ENCODE measurements at regions of chr7 and their contacts with region 1.

Region 1: GRCh38 chr7:91940572-91941341 is at the start of gene AKAP9:
- DNase-seq: peak; percentile 77 to 94 (median 84)
- ATAC-seq: peak; percentile 88
- H3K4me3 ChIP-seq: peak within 1 kb of the TSS; percentile 96
- H3K4me3 Mint-ChIP-seq: peak within 1 kb of the TSS; percentile 90
- H3K27ac ChIP-seq: peak within 1 kb of the TSS; percentile 82 to 93
- H3K27ac Mint-ChIP-seq: peak within 1 kb of the TSS; percentile 92
- H3K4me1 ChIP-seq: peaks cover 25% of the 10 kb centered on the region
- H3K4me1 Mint-ChIP-seq: peaks cover 49% of the 10 kb centered on the region
- H3K27me3 ChIP-seq: no peaks in the 10 kb centered on the region
- H3K27me3 Mint-ChIP-seq: no peaks in the 10 kb centered on the region
- CTCF ChIP-seq: no peak
- total RNA-seq, gene AKAP9: 62.5 to 64.8 TPM

Region 2: DNA sequence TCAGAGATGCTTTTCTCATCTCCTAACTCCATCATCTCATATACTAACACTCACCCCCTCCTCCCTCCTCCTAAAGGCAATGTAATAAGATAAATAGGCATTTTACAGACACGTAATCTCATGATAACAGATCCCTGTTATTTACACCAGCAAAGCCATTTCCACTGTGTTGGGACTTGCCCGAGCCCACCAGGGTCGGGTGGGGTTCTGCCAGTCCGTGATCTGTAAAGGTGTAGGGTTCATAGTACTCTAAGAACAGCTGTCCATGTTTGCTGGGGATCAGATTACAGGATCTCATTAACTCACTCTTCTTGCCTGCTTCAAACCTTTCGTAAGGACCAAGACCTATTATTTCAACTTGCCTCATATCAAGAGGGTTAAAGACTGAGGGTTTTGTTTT is 504.1 kb before region 1 on chr7:
- CTCF ChIA-PET with region 1: no interaction called
- POLR2A ChIA-PET with region 1: no interaction called
- intact Hi-C with region 1: no loop called
- DNase-seq: no peak
- ATAC-seq: no peak
- H3K4me3 ChIP-seq: no peak overlapping the region
- H3K4me3 Mint-ChIP-seq: no peak overlapping the region
- H3K27ac ChIP-seq: no peak overlapping the region
- H3K27ac Mint-ChIP-seq: no peak overlapping the region
- H3K4me1 ChIP-seq: no peaks in the 10 kb centered on the region
- H3K4me1 Mint-ChIP-seq: no peaks in the 10 kb centered on the region
- H3K27me3 ChIP-seq: no peaks in the 10 kb centered on the region
- H3K27me3 Mint-ChIP-seq: peaks cover 5% of the 10 kb centered on the region
- CTCF ChIP-seq: no peak

Region 3: DNA sequence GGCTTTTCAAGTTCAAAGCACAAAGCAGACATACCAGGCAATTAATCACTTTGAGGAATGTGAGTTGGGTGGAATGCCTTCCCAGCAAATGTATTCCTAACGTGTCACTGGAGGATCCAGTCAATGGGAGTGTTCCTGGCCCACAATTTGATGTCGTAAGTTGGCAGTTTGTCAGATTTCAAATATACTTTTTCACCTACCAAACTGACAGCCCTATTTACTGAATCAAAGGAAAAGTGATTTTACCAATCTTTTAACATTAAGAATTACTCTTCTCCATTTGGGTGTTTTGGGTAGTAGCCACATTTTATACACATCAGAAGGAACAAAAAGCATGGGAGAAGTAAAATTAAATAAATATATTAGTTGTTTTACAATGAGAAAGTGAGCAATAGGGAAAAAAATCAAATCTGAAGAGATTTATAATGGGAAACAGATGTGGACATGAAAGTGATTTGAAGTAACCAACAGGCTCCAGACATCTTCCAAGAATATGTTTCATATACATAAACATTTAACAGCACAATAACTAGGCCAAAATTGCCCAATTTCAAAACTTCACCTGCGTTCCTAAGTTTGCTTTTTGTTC is 283.2 kb before region 1 on chr7:
- CTCF ChIA-PET with region 1: no interaction called
- POLR2A ChIA-PET with region 1: no interaction called
- intact Hi-C with region 1: no loop called
- DNase-seq: no peak
- ATAC-seq: no peak
- H3K4me3 ChIP-seq: no peak overlapping the region
- H3K4me3 Mint-ChIP-seq: no peak overlapping the region
- H3K27ac ChIP-seq: no peak overlapping the region
- H3K27ac Mint-ChIP-seq: no peak overlapping the region
- H3K4me1 ChIP-seq: no peaks in the 10 kb centered on the region
- H3K4me1 Mint-ChIP-seq: no peaks in the 10 kb centered on the region
- H3K27me3 ChIP-seq: no peaks in the 10 kb centered on the region
- H3K27me3 Mint-ChIP-seq: no peaks in the 10 kb centered on the region
- CTCF ChIP-seq: no peak

Region 4: GRCh38 chr7:91979590-91979989 is 38.8 kb after region 1 on chr7:
- CTCF ChIA-PET with region 1: no interaction called
- POLR2A ChIA-PET with region 1: no interaction called
- intact Hi-C with region 1: loop called in 1 of 2 experiments (anchors 5 kb)
- DNase-seq: no peak
- ATAC-seq: no peak
- H3K4me3 ChIP-seq: no peak overlapping the region
- H3K4me3 Mint-ChIP-seq: no peak overlapping the region
- H3K27ac ChIP-seq: no peak overlapping the region
- H3K27ac Mint-ChIP-seq: no peak overlapping the region
- H3K4me1 ChIP-seq: no peaks in the 10 kb centered on the region
- H3K4me1 Mint-ChIP-seq: peaks cover 24% of the 10 kb centered on the region
- H3K27me3 ChIP-seq: no peaks in the 10 kb centered on the region
- H3K27me3 Mint-ChIP-seq: no peaks in the 10 kb centered on the region
- CTCF ChIP-seq: no peak

Region 5: DNA sequence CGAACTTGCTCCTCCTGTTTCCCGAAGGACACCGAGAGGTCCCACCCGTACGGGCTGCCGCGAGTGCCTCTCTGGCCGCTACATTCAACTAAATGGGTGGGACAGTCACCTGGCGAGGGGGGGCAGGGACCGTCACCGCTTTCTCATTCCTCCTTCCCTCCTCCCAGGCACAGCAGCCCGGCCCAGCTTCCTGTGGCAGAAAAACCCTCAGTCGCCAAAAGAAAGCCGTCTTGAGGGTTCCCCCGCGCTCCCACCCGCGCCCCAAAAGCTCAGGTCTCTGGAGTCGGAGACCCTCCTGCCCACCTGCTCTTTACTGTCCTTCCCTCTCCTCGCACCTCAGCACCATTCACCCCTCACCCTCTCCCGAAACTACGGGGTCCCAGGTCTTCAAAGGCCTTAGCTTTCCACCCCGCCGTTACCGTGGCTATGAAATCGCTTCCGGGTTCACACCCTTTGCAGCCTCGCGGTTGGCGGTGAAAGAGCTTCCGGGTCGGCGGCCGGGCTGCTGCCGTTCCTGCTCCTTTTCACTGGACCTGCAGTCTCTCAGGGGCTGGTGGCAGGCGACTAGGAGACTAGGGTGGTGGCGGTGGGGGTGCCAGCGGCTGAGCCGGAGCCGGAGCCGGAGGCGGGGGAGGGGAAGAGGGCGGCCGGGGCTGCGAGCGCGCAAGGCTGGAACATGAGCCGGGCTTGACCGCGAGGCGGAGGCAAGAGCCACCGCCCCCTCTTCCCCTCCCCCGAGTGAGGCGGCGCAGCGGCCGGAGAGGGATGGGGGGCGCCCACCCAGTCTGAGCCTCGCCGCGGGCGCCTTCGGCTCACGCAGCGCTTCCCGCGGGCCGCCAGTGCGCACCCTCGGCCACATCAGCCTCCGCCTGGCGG is 305.0 kb after region 1 on chr7 and contains the starts of genes ANKIB1 and KRIT1:
- CTCF ChIA-PET with region 1: no interaction called
- POLR2A ChIA-PET with region 1: interaction called, 16 read pairs
- intact Hi-C with region 1: no loop called
- DNase-seq: peak; percentile 76 to 93 (median 81)
- ATAC-seq: peak; percentile 78
- H3K4me3 ChIP-seq: peak within 1 kb of the TSS; percentile 87
- H3K4me3 Mint-ChIP-seq: peak within 1 kb of the TSS; percentile 97
- H3K27ac ChIP-seq: peak within 1 kb of the TSS; percentile 86 to 96
- H3K27ac Mint-ChIP-seq: peak within 1 kb of the TSS; percentile 99
- H3K4me1 ChIP-seq: peaks cover 17% of the 10 kb centered on the region
- H3K4me1 Mint-ChIP-seq: peaks cover 61% of the 10 kb centered on the region
- H3K27me3 ChIP-seq: no peaks in the 10 kb centered on the region
- H3K27me3 Mint-ChIP-seq: no peaks in the 10 kb centered on the region
- CTCF ChIP-seq: no peak
- total RNA-seq, gene ANKIB1: 60.0 to 66.9 TPM
- total RNA-seq, gene KRIT1: 28.6 to 28.7 TPM

Region 6: GRCh38 chr7:92534572-92534971 is 593.8 kb after region 1 on chr7:
- CTCF ChIA-PET with region 1: no interaction called
- POLR2A ChIA-PET with region 1: no interaction called
- intact Hi-C with region 1: loop called in 1 of 2 experiments (anchors 10 kb)
- DNase-seq: no peak
- ATAC-seq: no peak
- H3K4me3 ChIP-seq: no peak overlapping the region
- H3K4me3 Mint-ChIP-seq: no peak overlapping the region
- H3K27ac ChIP-seq: no peak overlapping the region
- H3K27ac Mint-ChIP-seq: no peak overlapping the region
- H3K4me1 ChIP-seq: peaks cover 8% of the 10 kb centered on the region
- H3K4me1 Mint-ChIP-seq: peaks cover 47% of the 10 kb centered on the region
- H3K27me3 ChIP-seq: no peaks in the 10 kb centered on the region
- H3K27me3 Mint-ChIP-seq: no peaks in the 10 kb centered on the region
- CTCF ChIP-seq: no peak

Region 7: GRCh38 chr7:92584996-92585395 is 644.2 kb after region 1 on chr7:
- CTCF ChIA-PET with region 1: no interaction called
- POLR2A ChIA-PET with region 1: no interaction called
- intact Hi-C with region 1: loop called in 1 of 2 experiments (anchors 10 kb)
- DNase-seq: peak in 4 of 14 experiments; percentile 6 to 50 (median 46)
- ATAC-seq: peak; percentile 33
- H3K4me3 ChIP-seq: no peak overlapping the region
- H3K4me3 Mint-ChIP-seq: peak overlapping the region; percentile 48
- H3K27ac ChIP-seq: no peak overlapping the region
- H3K27ac Mint-ChIP-seq: peak overlapping the region; percentile 70
- H3K4me1 ChIP-seq: peaks cover 26% of the 10 kb centered on the region
- H3K4me1 Mint-ChIP-seq: peaks cover 71% of the 10 kb centered on the region
- H3K27me3 ChIP-seq: no peaks in the 10 kb centered on the region
- H3K27me3 Mint-ChIP-seq: no peaks in the 10 kb centered on the region
- CTCF ChIP-seq: no peak

Measured in CD4-positive, alpha-beta T cell (primary cell).